ENCODE measurements at regions of chr20 and their contacts with region 1.

Region 1: DNA sequence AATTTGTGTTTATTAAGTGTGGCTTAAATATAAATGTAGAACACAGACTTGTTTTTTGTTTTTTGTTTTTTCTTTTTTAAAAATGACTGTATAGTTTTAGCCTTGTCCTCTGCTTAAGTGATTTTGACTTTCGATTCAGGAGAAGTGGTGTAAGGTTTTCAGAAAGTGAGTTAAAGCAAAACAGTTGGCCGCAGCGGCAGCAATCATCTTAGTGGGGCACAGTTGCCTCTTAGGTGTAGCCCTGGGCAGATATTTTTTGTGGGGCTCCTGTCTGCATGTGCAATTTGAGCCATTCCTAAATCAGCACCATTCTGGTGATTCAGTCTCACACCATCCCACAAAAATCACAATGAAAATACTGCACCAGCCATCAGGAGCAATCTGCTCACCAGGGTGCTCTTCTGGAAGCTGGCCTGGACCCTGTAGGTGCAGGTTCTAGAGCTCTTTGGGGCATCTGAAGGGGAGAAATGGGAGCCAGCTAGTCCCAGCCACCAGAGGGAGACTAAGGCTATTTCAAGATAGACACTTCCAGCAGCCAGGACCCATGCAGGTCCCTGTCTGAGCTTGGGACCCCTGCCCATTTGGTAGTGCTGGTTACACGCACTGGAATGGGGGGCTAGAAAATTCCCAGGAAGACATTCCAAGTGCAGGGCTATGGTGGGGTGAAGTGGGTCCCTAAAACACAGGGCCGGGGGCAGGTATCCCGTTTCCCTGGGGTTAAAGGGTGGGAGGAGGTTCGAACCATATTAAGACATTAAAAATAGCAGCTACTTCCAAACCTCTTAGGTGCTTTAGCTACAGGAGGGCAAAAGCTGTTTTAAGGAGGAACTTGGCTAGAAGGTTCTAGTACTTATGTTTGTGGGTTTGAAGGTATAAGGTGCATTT is 156.6 kb downstream of the NFATC2 start:
- DNase-seq: peak; percentile 73
- H3K27ac ChIP-seq: no peak overlapping the region
- CTCF ChIP-seq: no peak; the same call in 1 of the 2 replicates

Region 2: DNA sequence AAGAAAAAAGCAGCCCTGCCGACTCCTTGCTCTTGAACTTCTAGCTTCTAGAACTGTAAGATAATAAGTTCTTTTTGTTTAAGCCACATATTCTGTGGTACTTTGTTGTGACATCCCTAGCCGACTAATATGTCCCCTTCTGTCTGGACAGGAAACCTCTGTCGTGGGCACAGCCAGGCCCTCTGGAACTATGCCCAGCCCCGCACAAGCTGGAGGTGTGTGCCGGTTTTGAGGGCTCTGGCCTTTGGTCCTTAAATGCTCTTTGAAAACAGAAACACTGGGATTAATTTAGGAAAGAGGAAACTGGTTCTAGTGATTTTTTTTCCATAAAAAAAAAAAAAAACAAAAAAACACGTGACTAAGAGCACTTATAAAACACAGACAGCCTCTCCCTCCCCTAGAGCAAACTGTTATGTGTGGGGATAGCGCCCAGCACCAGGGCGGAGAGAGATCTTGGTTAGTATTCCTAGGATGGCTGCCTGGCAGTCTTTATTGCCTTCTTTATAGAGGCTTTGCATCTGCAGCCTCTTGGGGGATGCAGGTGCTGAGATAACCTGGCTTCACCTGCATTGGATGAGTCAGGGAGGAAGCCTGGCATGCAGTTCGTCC is 87.6 kb before region 1 on chr20:
- CTCF ChIA-PET with region 1: no interaction called
- POLR2A ChIA-PET with region 1: no interaction called
- DNase-seq: no peak
- H3K27ac ChIP-seq: no peak overlapping the region
- CTCF ChIP-seq: no peak

Region 3: DNA sequence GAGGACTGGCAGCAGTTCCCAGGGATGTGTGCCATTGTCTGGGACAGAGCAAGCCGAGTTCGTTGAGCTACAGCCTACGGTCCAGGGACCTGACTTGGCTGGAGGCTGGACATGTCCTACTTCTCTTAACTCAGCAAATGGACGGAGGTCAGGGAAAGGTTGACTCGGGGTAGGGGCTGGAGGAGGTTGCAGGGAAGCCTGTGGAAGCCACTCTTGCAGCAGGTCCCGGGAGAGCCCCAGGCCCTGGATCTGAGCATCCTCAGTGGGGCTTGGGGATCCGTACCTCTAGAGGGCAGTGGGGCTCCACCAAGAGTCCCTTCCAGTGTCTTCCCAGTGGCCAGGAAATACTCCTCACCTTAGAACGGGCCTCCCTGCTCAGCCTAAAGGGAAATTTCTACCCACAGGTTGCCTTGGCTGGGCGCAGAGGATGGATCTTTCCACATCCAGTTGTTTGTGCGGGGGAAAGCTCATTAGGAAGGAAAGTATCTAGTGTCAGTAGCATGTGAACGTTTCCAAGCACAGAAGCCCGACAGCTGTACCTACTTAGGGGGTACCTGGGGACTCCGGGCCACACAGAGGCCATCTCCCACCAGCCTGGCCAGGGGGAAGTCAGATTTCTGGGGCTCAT is 13.6 kb before region 1 on chr20:
- CTCF ChIA-PET with region 1: interaction called, 11 read pairs
- POLR2A ChIA-PET with region 1: no interaction called
- DNase-seq: peak; percentile 98
- H3K27ac ChIP-seq: no peak overlapping the region
- CTCF ChIP-seq: peak; percentile 95

Region 4: DNA sequence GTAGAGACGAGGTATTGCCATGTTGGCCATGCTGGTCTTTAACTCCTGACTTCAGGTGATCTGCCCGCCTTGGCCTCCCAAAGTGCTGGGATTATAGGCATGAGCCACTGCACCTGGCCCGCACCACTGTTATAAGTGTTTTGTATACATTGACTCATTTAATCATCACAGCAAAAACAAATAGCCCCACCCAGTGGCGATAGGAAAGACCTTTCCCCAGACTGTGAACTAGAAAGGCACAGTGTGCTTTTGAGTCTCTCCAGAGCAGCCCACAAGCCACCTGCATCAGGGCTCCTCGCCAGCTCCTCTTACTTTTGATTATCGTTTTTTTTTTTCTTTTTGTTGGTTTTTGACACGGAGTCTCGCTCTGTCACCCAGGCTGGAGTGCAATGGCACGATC is 833.6 kb after region 1 on chr20:
- CTCF ChIA-PET with region 1: no interaction called
- POLR2A ChIA-PET with region 1: no interaction called
- DNase-seq: peak; percentile 40
- H3K27ac ChIP-seq: no peak overlapping the region
- CTCF ChIP-seq: no peak